ENCODE measurements at regions of chr3 and their contacts with region 1.

Region 1: DNA sequence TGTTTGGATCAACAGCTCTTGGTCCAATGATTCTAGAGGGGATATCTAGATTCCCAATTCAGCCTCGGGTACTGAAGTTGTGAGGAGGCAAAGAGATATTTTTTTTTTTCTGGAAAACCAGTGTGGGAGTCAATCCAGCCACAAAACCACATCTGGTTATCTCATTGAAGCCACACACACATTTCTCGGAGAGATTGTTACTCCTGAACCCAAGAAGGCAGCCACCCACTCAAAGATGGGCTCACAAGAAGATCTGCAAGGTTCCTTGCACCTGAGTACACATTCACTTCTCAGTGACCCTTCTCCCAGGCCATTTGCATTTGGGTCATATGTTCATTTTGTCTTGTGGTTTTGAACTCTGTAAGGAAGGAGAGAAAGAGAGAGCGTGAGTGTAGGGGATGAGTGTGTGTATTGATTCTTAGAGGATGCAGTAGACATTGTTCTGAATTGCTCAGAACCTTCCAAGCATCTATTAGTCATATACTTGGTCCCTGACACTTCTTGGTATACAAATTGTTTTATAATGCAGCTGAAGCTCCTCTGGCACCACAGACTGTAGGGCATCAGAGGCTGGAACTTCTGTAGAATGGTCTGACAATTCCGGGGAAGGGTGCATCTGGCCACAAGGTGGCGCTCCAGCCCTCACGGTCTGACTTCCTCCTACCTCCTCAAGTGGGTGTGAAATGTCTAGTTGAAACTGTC is 39.3 kb upstream of the TRA2B start:
- DNase-seq: peak; percentile 75
- H3K4me3 ChIP-seq: no peak overlapping the region
- H3K27ac ChIP-seq: no peak overlapping the region
- H3K27me3 ChIP-seq: no peaks in the 10 kb centered on the region
- CTCF ChIP-seq: peak; percentile 97

Region 2: DNA sequence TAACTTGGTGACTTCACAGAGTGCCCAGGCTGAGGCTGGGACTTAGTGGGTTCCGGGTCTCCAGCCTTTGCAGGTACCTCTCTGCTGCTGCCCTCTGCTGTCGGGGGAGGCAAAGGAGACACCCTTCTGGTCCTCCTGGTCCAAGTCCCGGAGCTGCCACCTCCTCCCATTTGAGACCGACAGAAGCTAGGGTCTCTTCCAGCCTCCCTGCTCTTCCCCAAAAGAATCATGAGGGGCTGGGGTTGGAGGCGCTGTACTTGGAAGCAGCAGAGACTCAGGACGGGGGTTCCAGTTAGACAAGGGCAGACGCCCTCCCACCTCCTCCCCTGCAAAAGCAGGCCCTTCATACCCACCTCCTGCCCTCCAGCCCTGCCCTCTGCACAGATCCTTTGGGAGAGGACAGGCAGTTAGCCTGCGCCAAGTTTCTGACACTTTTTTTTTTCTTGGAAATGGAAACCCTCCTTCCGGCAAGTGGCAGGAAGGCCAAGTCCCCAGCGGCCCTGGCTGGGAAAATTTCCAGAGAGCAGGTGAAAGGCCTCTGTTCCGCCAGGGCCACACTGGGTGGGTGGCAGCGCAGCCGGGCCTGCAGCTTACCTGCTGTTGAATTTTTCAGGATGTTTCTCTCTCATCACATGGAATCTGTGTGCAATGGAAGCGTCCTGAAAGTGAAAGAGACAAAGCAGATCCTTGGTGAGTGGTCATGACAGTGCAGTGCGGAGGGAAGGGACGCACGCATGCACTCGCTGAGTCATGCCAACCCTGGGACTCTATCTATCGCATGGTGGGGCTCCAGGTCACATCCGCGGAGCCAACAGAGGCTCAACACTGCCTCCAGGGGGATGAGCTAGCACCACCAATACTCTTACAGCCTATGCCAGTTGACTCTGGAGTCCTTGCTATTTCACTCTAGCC is 265.0 kb after region 1 on chr3:
- in situ Hi-C with region 1: loop called (anchors 25 kb)
- DNase-seq: peak; percentile 90
- H3K4me3 ChIP-seq: peak overlapping the region; percentile 27
- H3K27ac ChIP-seq: peak overlapping the region; percentile 12
- H3K27me3 ChIP-seq: no peaks in the 10 kb centered on the region
- CTCF ChIP-seq: peak; percentile 84

Region 3: DNA sequence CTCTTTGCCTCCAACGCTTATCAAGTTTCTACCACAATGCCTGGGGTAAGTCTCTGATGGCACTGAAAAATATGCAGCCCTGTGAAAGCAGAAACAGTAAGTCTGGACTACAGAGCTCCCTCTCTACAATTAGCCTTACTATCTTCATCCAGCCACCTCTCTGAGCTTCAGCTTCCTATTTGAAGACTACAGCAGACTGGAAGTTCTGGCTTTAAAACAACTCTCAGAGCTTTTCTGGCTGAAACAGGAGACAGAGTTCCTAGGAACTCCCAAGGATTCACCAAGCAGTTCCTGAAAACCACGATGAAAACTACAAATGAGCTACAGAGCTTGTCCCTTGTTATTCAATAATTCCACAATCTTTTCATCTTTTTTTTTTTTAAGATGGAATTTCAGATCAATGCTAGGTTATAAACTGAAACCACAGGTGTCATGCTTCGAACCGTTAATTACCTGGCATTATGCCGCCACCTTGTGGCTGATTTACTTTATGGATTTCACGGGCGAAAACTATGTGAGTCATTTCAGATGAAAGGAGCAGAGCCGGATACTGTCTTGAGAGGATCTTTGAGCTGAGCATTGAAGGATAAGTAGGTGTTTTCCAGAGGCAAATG is 563.2 kb after region 1 on chr3:
- in situ Hi-C with region 1: loop called (anchors 25 kb)
- DNase-seq: peak; percentile 77
- H3K4me3 ChIP-seq: no peak overlapping the region
- H3K27ac ChIP-seq: no peak overlapping the region
- H3K27me3 ChIP-seq: no peaks in the 10 kb centered on the region
- CTCF ChIP-seq: peak; percentile 72

Measured in brain microvascular endothelial cell (primary cell).